ENCODE measurements at regions of chr11 and their contacts with region 1.

Region 1: DNA sequence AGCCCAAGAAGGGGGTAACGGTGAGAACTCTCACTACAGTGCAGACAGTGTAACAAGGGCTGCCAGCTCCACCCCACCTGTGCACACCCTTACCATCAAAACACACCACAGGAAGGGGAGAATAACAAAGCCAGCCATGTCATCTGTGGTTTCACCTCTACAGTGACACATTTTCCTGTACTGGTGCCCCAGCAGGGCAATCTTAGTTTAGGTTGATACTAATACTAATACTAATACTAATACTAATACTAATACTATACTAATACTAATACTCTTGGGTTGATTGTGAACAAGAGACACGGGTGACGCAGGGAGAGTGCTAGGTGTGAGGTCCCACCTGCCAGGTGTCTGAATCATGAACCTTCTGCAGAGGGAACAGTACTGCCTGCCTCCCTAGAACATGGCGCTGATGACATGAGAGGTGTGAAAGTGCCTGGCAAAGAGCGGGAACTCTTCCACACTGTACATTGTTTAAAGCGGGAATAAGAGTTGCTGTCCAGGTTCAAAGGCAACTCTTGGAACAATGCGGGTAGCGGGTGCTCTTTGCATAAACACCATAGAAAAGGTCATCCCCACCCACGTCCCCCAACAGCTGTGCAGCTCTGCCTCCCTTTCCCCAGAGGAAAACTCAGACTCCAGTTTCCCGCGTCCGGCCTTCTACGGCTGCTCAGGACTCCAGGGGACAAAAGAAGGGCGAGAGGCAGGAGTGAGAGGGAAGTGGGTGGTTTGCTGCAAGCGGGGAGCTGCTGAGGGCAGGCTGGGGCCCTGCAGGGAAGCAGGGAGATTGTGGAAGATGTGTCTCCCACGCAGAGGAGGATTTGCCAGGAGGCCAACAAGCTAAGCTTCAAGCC is 25.0 kb upstream of the TMPRSS4 start:
- DNase-seq: no peak
- ATAC-seq: no peak

Region 2: DNA sequence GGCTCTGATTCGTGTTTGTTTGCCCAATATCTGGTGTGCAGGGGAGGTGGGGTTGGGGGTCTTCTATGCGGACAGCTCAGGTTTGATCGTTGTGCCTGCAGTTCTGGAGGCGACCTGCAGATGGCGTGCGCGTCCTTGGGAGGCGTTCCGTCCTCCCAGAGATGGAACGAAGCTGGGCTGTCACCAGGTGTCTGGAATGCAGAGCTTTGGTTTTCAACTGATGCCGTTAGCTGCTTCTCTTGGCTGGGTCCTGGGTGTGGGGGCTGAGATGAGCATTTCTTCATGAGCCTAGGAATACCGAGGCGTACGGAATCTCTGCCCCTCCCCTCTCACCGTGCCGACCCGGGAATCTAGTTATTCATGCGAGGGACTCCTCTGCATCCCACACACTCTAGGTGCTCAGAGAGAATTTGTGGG is 625.6 kb before region 1 on chr11:
- intact Hi-C with region 1: loop called (anchors 10 kb)
- DNase-seq: peak; percentile 83
- ATAC-seq: peak; percentile 45

Region 3: DNA sequence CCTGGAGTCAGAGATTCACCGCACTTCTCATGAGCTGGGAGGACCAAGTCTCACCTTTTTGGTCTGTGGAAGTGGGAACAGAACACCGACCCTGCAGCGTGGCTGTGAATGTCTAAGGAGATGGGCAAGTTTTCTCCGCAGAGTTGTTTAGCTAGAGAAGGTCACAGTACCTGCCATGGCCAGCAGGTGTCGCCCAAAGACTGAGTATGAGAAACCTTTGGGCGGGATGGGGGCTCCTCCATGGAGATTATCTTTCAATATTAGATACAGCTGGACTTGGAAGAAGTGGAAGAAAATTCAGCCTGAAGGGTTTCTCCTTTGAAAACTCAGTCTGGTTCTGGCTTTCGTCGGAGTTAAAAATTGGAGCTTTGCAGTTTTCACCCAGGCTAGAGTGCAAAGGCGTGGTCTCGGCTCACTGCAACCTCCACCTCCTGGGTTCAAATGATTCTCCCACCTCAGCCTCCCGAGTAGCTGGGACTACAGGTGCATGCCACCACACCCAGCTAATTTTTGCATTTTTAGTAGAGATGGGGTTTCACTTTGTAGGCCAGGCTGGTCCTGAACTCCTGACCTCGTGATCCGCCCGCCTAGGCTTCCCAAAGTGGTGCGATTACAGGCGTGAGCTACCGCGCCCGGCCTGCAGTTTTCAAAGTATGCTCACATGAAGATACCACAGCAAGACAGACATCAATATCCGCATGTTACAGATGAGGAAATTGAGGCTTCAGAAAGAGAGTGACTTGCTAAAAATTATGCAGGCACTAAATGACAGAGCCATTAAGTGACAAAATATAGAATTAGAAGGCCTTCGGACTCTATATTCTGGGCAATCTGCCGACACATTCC is 244.1 kb before region 1 on chr11:
- intact Hi-C with region 1: loop called (anchors 5 kb)
- DNase-seq: peak; percentile 91
- ATAC-seq: peak; percentile 54

Region 4: DNA sequence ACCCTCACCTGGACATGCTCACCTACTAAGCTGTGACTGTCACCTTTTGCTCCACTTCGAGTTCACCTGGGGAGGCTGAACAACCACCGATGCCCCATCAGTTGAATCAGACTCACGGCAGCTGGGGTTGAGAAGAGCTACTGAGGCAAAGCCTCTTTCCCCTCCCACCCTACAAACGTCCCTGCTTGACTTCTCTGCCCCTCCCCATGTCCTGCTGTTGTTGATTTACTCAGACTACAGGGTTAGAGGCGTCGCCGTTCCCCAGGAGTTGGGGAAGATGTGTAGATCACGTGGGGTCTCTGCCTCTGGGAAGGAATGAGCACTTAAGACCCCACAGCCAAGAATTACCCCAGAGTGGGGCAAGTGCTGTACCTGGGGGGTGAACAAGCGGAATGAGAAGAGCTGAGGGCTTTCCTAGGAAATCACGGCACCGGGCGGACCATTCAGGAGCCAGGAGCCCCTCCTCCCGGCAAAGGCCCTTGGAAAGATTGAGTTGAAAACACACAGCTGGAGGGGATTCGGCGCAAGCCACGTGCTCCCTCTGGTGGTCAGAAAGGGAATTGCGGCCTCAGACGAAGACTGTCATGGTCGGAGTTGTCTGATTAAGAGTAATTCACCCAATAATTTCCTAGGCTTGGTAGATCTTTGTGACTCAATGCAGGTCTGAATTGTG is 234.3 kb before region 1 on chr11:
- intact Hi-C with region 1: loop called (anchors 5 kb)
- DNase-seq: peak; percentile 88
- ATAC-seq: peak; percentile 67

Region 5: DNA sequence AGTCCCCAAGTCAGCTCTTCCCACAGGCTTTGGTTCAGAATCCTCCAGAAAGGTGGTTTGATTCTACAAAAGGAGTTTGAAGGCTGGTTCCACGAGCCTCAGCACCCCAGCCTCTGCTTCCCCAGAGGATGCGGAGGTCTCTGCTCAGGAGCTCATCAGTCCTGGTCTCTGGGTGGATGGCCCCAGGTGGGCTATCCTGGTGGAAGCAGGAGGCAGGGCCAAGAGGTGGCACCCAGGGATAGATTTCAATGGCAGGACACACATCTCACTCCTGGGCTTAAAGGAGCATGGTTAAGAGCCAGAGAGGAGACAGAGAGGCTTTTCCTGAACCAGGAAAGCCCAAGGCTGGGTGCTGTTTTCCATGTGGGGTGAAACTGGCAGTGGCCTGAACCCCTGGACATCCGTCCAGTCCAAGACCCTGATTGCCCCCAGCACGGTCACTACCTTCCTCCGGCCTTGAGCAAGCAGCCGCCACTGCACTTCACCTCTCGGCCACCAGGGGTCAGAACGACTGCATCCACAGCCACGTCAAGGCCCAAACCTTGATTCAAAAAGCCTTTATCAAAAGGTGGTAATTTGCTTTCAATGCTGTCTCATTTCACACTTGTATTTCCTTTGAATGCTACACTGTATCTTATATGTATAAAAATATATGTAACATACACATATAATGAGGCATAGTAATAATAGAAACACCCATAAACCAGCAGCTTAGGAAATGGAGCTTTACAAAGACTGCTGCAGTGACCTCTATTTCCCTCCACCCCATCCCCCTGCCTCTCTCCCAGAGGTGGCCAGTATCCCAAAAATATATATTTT is 208.0 kb before region 1 on chr11:
- intact Hi-C with region 1: loop called (anchors 2 kb)
- DNase-seq: peak; percentile 90
- ATAC-seq: peak; percentile 72

Region 6: GRCh38 chr11:117946842-117947526 is 104.9 kb before region 1 on chr11:
- intact Hi-C with region 1: loop called (anchors 5 kb)
- DNase-seq: peak; percentile 89
- ATAC-seq: peak; percentile 96

Measured in Right ventricle myocardium inferior (tissue), 1 donor.